Activated CD8-positive, alpha-beta T cell treated with anti-CD3 and anti-CD28 coated beads for 36 hours (primary cell): ENCODE measurements at regions of chr9 and their contacts with region 1.

Region 1: GRCh38 chr9:128927731-128928411 is 7.1 kb downstream of the PHYHD1 start:
- DNase-seq: peak; percentile 61
- ATAC-seq: peak; percentile 92
- H3K4me3 Mint-ChIP-seq: no peak overlapping the region
- H3K27ac Mint-ChIP-seq: no peak overlapping the region
- H3K4me1 Mint-ChIP-seq: peaks cover 2% of the 10 kb centered on the region
- H3K27me3 Mint-ChIP-seq: no peaks in the 10 kb centered on the region
- CTCF ChIP-seq: peak; percentile 95

Region 2: DNA sequence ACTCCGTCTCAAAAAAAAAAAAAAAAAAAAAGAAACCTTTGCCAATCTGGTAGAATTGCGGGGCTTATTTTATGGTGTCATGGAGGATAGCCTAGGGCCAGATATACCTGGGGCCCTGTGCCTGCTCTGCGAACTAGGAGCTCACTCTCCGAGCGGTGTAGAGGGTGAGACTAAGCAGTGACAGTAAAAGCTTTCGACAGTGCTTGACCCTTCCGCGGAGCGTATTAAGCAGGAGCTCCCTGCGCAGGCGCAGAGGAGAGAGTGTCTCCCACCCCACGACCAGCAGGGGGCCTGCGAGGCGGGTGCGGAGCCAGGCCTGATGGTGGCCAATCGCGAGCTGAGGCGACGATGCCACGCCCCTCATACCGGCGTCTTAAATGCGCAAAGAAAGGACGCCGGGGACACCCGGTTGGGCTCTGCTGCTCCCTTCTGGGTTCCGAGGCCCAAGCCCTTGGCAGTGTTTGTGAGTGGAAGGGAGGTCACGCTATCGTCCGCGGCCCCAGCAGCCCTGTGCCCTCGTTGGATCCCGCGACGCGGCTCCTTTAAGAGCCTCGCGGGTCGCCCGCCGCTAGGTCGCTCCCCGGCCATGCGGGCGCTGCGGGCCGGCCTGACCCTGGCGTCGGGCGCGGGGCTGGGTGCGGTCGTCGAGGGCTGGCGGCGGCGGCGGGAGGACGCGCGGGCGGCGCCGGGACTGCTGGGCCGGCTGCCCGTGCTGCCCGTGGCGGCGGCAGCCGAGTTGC is 109.6 kb before region 1 on chr9 and contains the start of gene ENDOG:
- CTCF ChIA-PET with region 1: interaction called, 13 read pairs
- POLR2A ChIA-PET with region 1: interaction called, 4 read pairs
- intact Hi-C with region 1: no loop called
- DNase-seq: peak; percentile 98
- ATAC-seq: peak; percentile 97
- H3K4me3 Mint-ChIP-seq: peak within 1 kb of the TSS; percentile 80
- H3K27ac Mint-ChIP-seq: peak within 1 kb of the TSS; percentile 84
- H3K4me1 Mint-ChIP-seq: peaks cover 19% of the 10 kb centered on the region
- H3K27me3 Mint-ChIP-seq: no peaks in the 10 kb centered on the region
- CTCF ChIP-seq: peak; percentile 94
- total RNA-seq, gene ENDOG: 21.8 to 23.9 TPM

Region 3: GRCh38 chr9:128863647-128864046 is 64.2 kb before region 1 on chr9:
- CTCF ChIA-PET with region 1: interaction called, 157 read pairs
- POLR2A ChIA-PET with region 1: no interaction called
- intact Hi-C with region 1: loop called (anchors 1 kb)
- DNase-seq: peak; percentile 92
- ATAC-seq: peak; percentile 99
- H3K4me3 Mint-ChIP-seq: no peak overlapping the region
- H3K27ac Mint-ChIP-seq: peak overlapping the region; percentile 30
- H3K4me1 Mint-ChIP-seq: peaks cover 5% of the 10 kb centered on the region
- H3K27me3 Mint-ChIP-seq: no peaks in the 10 kb centered on the region
- CTCF ChIP-seq: peak; percentile 98

Region 4: DNA sequence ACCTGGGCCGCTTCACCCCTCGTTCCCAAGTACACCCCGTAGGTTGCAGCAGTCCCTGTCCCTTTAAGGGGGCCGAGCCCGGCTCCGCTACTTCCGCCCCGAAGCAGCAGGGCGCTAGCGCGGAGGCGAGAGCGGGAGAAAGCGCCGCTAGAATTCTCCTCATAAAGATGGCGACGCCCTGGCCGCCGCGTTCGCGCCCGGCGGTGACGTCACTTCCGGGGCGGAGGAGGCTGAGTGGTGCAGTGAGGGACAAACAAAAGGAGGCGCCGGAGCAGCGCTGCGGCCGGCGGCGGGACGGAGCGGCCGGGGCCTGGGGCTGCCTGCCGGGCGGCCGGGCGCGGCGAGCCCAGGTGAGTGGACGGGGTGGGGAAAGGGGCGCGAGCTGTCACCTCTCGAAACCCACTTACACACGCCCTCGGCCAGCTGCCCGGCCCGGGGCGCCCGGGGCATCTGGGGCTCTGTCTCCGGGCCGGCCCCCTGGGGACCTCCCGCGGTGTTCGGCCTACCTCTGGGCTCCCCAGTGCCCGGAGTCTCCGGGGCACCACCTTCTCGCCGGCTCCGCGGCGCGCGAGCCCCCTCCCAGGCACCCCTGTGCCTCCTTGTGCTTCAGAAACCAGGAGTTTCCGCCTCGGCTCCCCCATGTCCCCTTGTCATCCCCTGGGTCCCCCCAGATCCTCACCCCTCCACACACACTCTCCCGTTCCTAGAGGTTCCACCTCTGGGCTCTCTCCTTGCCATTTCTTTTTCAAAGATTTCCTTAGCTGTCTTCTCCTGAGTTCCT is 45.8 kb before region 1 on chr9 and contains the starts of genes KYAT1 and LRRC8A:
- CTCF ChIA-PET with region 1: interaction called, 87 read pairs
- POLR2A ChIA-PET with region 1: interaction called, 5 read pairs
- intact Hi-C with region 1: loop called (anchors 5 kb)
- DNase-seq: peak; percentile 99
- ATAC-seq: peak; percentile 93
- H3K4me3 Mint-ChIP-seq: peak within 1 kb of the TSS; percentile 87
- H3K27ac Mint-ChIP-seq: peak within 1 kb of the TSS; percentile 92
- H3K4me1 Mint-ChIP-seq: peaks cover 43% of the 10 kb centered on the region
- H3K27me3 Mint-ChIP-seq: no peaks in the 10 kb centered on the region
- CTCF ChIP-seq: no peak
- total RNA-seq, gene KYAT1: 17.0 to 18.6 TPM
- total RNA-seq, gene LRRC8A: 15.1 to 16.2 TPM

Region 5: DNA sequence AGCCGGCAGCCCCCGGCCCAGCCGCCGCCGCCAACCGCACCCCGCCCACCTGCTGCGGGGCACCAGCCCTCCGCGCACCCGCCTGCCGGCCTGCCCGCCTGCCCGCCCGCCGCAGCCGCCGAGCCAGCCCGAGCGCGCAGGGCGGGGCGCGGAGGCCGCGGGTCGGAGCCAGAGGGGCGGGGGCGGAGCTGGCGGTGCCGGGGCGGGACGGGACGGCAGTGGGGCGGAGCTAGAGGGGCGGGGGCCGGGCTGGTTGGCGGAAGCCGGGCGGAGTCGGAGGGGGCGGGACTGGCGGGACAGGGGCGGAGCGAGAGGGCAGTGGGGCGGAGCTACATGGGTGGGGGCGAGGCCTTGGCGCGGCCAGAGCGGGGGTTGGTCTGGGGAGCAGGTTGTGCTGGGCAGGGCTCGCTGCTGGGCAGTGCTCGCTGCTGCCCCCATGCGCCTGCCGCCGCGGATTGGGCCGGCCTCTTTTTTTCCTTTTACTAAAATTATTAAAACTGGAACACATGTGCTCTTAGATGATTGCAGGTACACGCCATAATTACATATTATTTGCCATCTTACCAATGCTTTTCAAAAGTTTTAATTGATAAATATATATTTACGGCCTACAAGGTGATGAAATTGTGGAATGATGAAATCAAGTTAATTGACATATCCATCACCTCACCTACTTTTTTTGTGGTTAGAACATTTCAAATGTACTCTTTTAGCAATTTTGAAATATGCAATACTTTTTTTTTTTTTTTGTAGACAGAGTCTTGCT is 100.5 kb after region 1 on chr9 and contains the start of gene SH3GLB2:
- CTCF ChIA-PET with region 1: no interaction called
- POLR2A ChIA-PET with region 1: no interaction called
- intact Hi-C with region 1: no loop called
- DNase-seq: peak; percentile 94
- ATAC-seq: peak; percentile 95
- H3K4me3 Mint-ChIP-seq: peak within 1 kb of the TSS; percentile 80
- H3K27ac Mint-ChIP-seq: peak within 1 kb of the TSS; percentile 79
- H3K4me1 Mint-ChIP-seq: peaks cover 17% of the 10 kb centered on the region
- H3K27me3 Mint-ChIP-seq: no peaks in the 10 kb centered on the region
- CTCF ChIP-seq: peak; percentile 39
- total RNA-seq, gene SH3GLB2: 49.3 to 50.8 TPM

Region 6: DNA sequence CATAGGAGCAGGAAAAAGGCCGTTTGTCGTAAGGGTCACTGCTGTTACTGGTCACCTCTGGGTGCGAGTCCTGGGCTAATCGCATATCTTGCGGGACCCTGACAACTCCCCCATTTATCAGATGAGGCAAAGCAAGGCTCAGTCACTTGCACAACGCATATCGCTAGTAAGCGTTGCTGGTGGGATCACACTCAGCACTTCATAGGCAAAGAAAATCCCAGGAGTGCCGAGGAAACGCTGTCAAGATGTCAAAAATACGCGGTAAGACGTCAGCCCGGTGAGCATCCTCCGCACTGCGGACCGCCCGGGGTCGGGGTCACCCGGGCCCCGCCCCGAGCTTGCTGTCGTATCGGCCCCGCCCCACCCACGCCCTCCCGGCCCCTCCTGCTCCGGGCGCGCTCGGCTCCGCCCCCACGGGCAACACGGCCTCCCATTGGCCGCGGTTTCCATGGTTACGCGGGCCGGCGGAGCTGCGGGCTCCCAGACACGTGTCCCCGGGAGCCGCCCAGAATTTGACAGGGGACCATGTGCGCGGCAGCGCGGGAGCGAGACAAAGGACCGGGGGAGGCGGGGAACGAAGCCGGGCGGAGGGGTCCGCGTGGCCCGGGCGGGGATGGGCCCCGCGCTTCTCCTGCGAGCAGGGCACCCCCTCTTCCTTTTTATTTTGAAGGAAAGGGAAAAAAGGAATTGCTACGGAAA is 330.4 kb after region 1 on chr9:
- CTCF ChIA-PET with region 1: no interaction called
- POLR2A ChIA-PET with region 1: no interaction called
- intact Hi-C with region 1: no loop called
- DNase-seq: peak; percentile 94
- ATAC-seq: peak; percentile 96
- H3K4me3 Mint-ChIP-seq: peak overlapping the region; percentile 57
- H3K27ac Mint-ChIP-seq: no peak overlapping the region
- H3K4me1 Mint-ChIP-seq: peaks cover 30% of the 10 kb centered on the region
- H3K27me3 Mint-ChIP-seq: peaks cover 9% of the 10 kb centered on the region
- CTCF ChIP-seq: no peak